ENCODE measurements at regions of chr12 and their contacts with region 1.

Region 1: DNA sequence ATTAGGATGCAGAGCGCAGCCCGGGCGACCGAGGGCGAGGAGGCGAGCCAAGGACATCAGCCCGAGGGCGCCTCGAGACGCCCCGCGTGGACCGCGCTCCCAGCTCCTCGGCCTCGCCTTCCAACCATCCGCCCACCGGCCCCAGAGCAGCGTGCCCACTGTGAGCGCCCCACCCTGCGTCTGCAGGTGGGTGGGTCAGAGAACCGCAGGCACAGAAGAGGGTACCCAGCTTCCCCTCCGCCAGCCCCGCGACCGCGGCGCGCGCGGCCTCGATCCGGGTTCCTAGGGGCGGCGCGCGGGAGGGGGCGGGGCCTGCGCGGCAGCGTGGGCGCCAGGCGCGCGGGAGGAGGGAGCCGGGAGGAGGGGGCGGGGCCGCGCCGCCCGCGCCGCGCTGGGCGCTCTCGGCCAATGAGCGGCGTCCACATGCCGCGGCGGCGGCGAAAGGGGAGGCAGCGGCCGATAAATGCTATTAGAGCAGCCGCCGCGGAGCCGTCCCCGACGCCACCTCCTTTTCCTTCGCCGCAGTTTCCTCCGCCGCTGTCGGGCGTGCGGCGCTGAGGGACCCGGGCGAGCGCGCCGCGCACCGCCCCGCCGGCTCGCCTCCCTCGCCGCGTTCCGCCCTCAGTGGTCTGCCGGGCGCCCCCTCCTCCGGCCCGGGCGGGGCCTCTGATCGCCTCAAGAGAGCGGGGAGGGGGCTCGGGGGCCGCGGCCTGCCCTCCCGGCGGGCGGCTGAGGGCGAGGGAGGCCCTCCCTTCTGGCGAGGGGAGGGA is at the start of gene ATP2A2:
- H3K4me3 Mint-ChIP-seq: peak within 1 kb of the TSS; percentile 92
- H3K27ac Mint-ChIP-seq: peak within 1 kb of the TSS; percentile 95
- H3K4me1 Mint-ChIP-seq: peaks cover 38% of the 10 kb centered on the region
- H3K27me3 Mint-ChIP-seq: peaks cover 10% of the 10 kb centered on the region

Region 2: GRCh38 chr12:110100315-110100970 is 180.5 kb before region 1 on chr12:
- intact Hi-C with region 1: loop called (anchors 10 kb)
- H3K4me3 Mint-ChIP-seq: no peak overlapping the region
- H3K27ac Mint-ChIP-seq: peak overlapping the region; percentile 48
- H3K4me1 Mint-ChIP-seq: peaks cover 32% of the 10 kb centered on the region
- H3K27me3 Mint-ChIP-seq: no peaks in the 10 kb centered on the region

Region 3: GRCh38 chr12:110234755-110235154 is 46.2 kb before region 1 on chr12:
- intact Hi-C with region 1: loop called (anchors 10 kb)
- H3K4me3 Mint-ChIP-seq: peak overlapping the region; percentile 17
- H3K27ac Mint-ChIP-seq: peak overlapping the region; percentile 71
- H3K4me1 Mint-ChIP-seq: peaks cover 15% of the 10 kb centered on the region
- H3K27me3 Mint-ChIP-seq: no peaks in the 10 kb centered on the region

Region 4: GRCh38 chr12:110256780-110257431 is 24.1 kb before region 1 on chr12:
- intact Hi-C with region 1: loop called (anchors 2 kb)
- H3K4me3 Mint-ChIP-seq: peak overlapping the region; percentile 37
- H3K27ac Mint-ChIP-seq: peak overlapping the region; percentile 85
- H3K4me1 Mint-ChIP-seq: peaks cover 26% of the 10 kb centered on the region
- H3K27me3 Mint-ChIP-seq: no peaks in the 10 kb centered on the region